ENCODE measurements at regions of chr3 and their contacts with region 1.

Region 1: DNA sequence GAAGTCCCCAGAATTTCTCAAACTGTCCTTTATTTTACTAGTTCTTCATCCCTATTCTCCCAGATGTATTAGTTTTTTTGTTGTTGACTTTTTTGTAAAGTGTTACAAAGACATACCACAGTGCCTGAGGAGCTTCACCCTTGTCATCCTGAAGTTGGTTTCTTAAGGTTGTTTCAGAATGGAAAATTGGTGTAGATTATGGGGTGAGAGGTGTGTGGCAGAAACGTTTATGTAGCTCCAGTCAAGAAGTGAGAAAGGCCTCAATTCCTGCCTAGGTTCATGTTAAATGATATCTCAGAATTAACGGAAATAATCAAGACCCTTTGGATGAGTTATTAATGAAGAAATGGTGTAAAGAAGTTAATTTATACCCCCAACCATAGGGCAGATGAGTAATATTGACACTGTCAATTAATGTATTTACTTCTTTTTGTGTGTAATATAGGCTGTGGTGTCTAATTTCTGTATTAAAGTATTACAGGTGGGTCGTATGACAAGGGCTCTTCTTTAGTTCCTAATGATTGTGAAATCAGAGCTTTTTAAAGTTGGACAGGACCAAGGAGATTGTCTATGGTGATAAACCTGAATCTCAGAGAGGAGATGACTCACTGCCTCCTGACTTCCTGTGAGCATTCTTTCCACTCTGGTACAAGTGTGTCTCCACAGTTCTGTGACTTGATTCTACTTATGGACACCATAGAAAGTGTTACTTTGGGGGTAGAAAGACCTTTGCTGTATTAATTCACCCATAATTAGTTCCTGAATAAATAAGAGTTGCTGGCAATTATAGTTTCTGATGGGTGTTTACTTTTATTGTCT is 7.0 kb downstream of the EDEM1 start:
- DNase-seq: peak in 8 of 14 experiments; percentile 18 to 85 (median 39)
- ATAC-seq: peak; percentile 56
- H3K4me3 ChIP-seq: no peak overlapping the region
- H3K4me3 Mint-ChIP-seq: peak overlapping the region; percentile 22
- H3K27ac ChIP-seq: peak overlapping the region; percentile 48 to 71
- H3K27ac Mint-ChIP-seq: peak overlapping the region; percentile 87
- H3K4me1 ChIP-seq: peaks cover 75% of the 10 kb centered on the region
- H3K4me1 Mint-ChIP-seq: peaks cover 86% of the 10 kb centered on the region
- H3K27me3 ChIP-seq: no peaks in the 10 kb centered on the region
- H3K27me3 Mint-ChIP-seq: no peaks in the 10 kb centered on the region
- CTCF ChIP-seq: no peak

Region 2: GRCh38 chr3:4670352-4670751 is 524.2 kb before region 1 on chr3:
- CTCF ChIA-PET with region 1: no interaction called
- POLR2A ChIA-PET with region 1: no interaction called
- intact Hi-C with region 1: no loop called
- DNase-seq: peak in 1 of 14 experiments; percentile 4
- ATAC-seq: no peak
- H3K4me3 ChIP-seq: no peak overlapping the region
- H3K4me3 Mint-ChIP-seq: no peak overlapping the region
- H3K27ac ChIP-seq: no peak overlapping the region
- H3K27ac Mint-ChIP-seq: no peak overlapping the region
- H3K4me1 ChIP-seq: no peaks in the 10 kb centered on the region
- H3K4me1 Mint-ChIP-seq: no peaks in the 10 kb centered on the region
- H3K27me3 ChIP-seq: no peaks in the 10 kb centered on the region
- H3K27me3 Mint-ChIP-seq: no peaks in the 10 kb centered on the region
- CTCF ChIP-seq: no peak

Region 3: DNA sequence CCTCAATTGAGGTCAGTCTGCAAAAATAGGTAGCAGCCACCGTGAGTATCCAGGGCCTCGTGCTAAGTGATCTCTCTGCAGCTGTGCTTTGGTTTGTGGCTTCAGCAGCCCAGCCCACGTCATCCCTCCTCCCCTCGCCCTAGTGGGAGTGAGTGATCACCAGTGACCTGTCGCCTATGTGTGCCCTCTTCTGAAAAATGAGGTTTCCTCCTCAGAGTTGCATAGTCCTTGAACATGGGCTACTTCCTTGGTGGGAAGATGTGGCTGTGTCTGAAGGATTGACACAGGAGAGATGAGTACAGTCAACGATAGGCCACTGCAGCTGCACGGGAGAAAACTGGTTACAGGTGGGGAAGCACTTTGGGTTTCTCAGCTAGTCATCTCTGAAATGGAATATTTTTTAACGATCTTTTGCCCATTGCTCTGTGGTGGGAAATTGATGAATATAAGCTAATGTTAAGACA is 360.1 kb before region 1 on chr3:
- CTCF ChIA-PET with region 1: no interaction called
- POLR2A ChIA-PET with region 1: no interaction called
- intact Hi-C with region 1: loop called in 1 of 2 experiments (anchors 10 kb)
- DNase-seq: peak; percentile 49 to 91 (median 60)
- ATAC-seq: peak; percentile 35
- H3K4me3 ChIP-seq: no peak overlapping the region
- H3K4me3 Mint-ChIP-seq: peak overlapping the region; percentile 55
- H3K27ac ChIP-seq: peak overlapping the region; percentile 19 to 24
- H3K27ac Mint-ChIP-seq: peak overlapping the region; percentile 92
- H3K4me1 ChIP-seq: peaks cover 75% of the 10 kb centered on the region
- H3K4me1 Mint-ChIP-seq: peaks cover 76% of the 10 kb centered on the region
- H3K27me3 ChIP-seq: no peaks in the 10 kb centered on the region
- H3K27me3 Mint-ChIP-seq: no peaks in the 10 kb centered on the region
- CTCF ChIP-seq: no peak

Region 4: GRCh38 chr3:4986782-4987537 is 207.6 kb before region 1 on chr3:
- CTCF ChIA-PET with region 1: no interaction called
- POLR2A ChIA-PET with region 1: interaction called, 3 read pairs
- intact Hi-C with region 1: loop called in 1 of 2 experiments (anchors 10 kb)
- DNase-seq: peak; percentile 45 to 88 (median 58)
- ATAC-seq: peak; percentile 37
- H3K4me3 ChIP-seq: peak overlapping the region; percentile 67
- H3K4me3 Mint-ChIP-seq: peak overlapping the region; percentile 86
- H3K27ac ChIP-seq: peak overlapping the region; percentile 29 to 59
- H3K27ac Mint-ChIP-seq: peak overlapping the region; percentile 89
- H3K4me1 ChIP-seq: peaks cover 55% of the 10 kb centered on the region
- H3K4me1 Mint-ChIP-seq: peaks cover 45% of the 10 kb centered on the region
- H3K27me3 ChIP-seq: no peaks in the 10 kb centered on the region
- H3K27me3 Mint-ChIP-seq: no peaks in the 10 kb centered on the region
- CTCF ChIP-seq: no peak

Region 5: GRCh38 chr3:5181469-5182141 is 12.9 kb before region 1 on chr3:
- CTCF ChIA-PET with region 1: interaction called, 12 read pairs
- POLR2A ChIA-PET with region 1: interaction called, 185 read pairs
- intact Hi-C with region 1: no loop called
- DNase-seq: no peak
- ATAC-seq: peak; percentile 72
- H3K4me3 ChIP-seq: no peak overlapping the region
- H3K4me3 Mint-ChIP-seq: no peak overlapping the region
- H3K27ac ChIP-seq: peak overlapping the region in 1 of 2 donors; percentile 12
- H3K27ac Mint-ChIP-seq: peak overlapping the region; percentile 66
- H3K4me1 ChIP-seq: peaks cover 7% of the 10 kb centered on the region
- H3K4me1 Mint-ChIP-seq: peaks cover 29% of the 10 kb centered on the region
- H3K27me3 ChIP-seq: no peaks in the 10 kb centered on the region
- H3K27me3 Mint-ChIP-seq: no peaks in the 10 kb centered on the region
- CTCF ChIP-seq: no peak